Sciatic nerve (tissue), 2 donors: ENCODE measurements at regions of chr4 and their contacts with region 1.

Region 1: GRCh38 chr4:115740806-115741205 is 627.4 kb upstream of the NDST4 start:
- DNase-seq: no peak
- ATAC-seq: no peak

Region 2: DNA sequence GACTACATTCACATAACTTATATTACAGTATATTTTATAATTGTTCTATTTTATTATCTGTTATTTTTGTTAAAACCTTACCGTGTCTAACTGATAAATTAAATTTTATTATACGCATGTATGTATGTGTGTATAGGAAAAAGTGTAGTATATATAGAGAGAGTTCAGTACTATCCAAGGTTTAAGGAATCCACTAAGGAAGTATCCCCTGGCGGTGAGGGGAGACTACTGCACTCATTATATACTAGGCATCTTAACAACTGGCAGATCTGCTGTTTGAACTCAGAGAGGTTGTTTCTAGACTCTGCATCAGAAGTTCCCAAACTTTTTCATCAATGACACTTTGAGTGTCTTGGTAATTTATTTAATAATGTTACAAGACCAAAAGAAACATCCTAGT is 698.3 kb before region 1 on chr4:
- intact Hi-C with region 1: loop called (anchors 5 kb)
- DNase-seq: no peak
- ATAC-seq: no peak